Activated CD4-positive, alpha-beta T cell treated with anti-CD3 and anti-CD28 coated beads for 36 hours (primary cell): ENCODE measurements at regions of chr10 and their contacts with region 1.

Region 1: GRCh38 chr10:6050801-6051445 is 11.2 kb downstream of the IL2RA start:
- DNase-seq: peak; percentile 96
- ATAC-seq: peak; percentile 37
- H3K4me3 Mint-ChIP-seq: peak overlapping the region; percentile 81
- H3K27ac Mint-ChIP-seq: peak overlapping the region; percentile 96
- H3K4me1 Mint-ChIP-seq: peaks cover 85% of the 10 kb centered on the region
- H3K27me3 Mint-ChIP-seq: no peaks in the 10 kb centered on the region

Region 2: GRCh38 chr10:4825851-4826665 is 1224.9 kb before region 1 on chr10 and contains the start of gene AKR1E2:
- CTCF ChIA-PET with region 1: no interaction called
- POLR2A ChIA-PET with region 1: no interaction called
- intact Hi-C with region 1: no loop called
- DNase-seq: peak; percentile 93
- ATAC-seq: peak; percentile 94
- H3K4me3 Mint-ChIP-seq: peak within 1 kb of the TSS; percentile 77
- H3K27ac Mint-ChIP-seq: peak within 1 kb of the TSS; percentile 83
- H3K4me1 Mint-ChIP-seq: peaks cover 27% of the 10 kb centered on the region
- H3K27me3 Mint-ChIP-seq: peaks cover 9% of the 10 kb centered on the region
- total RNA-seq, gene AKR1E2: 9.8 to 13.4 TPM

Region 3: DNA sequence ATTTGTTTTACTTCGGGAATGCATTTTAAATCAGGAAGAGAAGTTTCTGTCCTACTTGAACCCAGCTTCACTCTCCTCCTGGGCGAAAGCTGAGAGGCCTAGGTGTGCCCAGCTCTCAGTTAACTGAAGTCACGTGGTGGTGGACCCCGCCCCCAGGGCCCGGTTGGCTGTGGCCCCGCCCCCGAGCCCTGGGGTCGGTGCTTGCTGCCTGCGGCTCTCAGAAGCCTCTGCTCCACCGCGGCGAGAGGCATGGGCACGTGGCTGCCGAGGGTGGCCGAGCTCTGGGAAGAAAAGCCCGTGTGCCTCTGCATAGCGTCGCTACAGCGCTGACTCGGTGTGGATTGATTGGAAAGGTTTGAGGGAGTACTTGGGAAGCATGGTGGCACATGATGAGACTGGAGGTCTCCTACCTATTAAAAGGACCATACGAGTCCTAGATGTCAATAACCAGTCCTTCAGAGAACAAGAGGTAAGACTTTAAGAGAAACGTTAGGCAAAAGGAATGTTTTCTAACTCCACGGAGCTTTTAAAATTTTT is 604.5 kb before region 1 on chr10:
- CTCF ChIA-PET with region 1: no interaction called
- POLR2A ChIA-PET with region 1: no interaction called
- intact Hi-C with region 1: loop called in 1 of 2 experiments (anchors 10 kb)
- DNase-seq: peak; percentile 86
- ATAC-seq: peak; percentile 71
- H3K4me3 Mint-ChIP-seq: peak overlapping the region; percentile 70
- H3K27ac Mint-ChIP-seq: peak overlapping the region; percentile 45
- H3K4me1 Mint-ChIP-seq: peaks cover 53% of the 10 kb centered on the region
- H3K27me3 Mint-ChIP-seq: no peaks in the 10 kb centered on the region

Region 4: GRCh38 chr10:5977471-5978229 is 73.3 kb before region 1 on chr10 and contains the start of gene IL15RA:
- CTCF ChIA-PET with region 1: interaction called, 6 read pairs
- POLR2A ChIA-PET with region 1: interaction called, 3 read pairs
- intact Hi-C with region 1: loop called (anchors 2 to 5 kb)
- DNase-seq: peak; percentile 95
- ATAC-seq: peak; percentile 72
- H3K4me3 Mint-ChIP-seq: peak within 1 kb of the TSS; percentile 94
- H3K27ac Mint-ChIP-seq: peak within 1 kb of the TSS; percentile 95
- H3K4me1 Mint-ChIP-seq: peaks cover 28% of the 10 kb centered on the region
- H3K27me3 Mint-ChIP-seq: no peaks in the 10 kb centered on the region
- total RNA-seq, gene IL15RA: 19.7 to 22.1 TPM

Region 5: DNA sequence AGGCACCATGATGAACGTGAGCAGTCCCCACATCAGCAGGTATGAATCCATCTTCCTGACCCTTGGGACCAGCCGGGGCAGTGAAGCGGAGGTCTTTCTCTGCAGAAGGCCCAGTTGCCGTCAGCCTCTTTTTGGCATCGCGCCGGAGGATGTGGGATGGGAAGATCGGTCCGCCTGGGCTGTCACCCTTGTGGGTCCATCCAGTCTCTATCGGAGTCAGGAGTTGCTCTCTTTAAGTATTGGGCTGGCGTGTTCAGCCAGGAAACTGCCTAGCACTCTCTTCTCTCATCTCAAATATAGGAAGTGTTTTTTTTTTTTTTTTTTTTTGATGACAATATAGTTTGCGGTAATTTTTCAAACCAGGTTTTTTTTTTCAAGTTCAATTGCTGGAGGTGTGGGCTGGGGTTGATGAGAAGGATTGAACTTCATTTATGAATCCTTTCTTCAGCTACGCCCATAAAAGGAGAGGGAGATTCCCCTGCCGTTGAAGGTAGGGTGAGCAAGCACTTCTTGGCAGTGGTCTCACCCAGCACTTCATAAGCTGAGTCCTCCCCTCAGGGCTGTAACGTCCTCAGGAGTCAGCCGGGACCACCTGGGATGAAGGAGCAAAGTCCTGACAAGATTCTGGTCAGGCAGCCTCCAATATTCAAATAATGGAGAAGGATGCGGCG is 11.3 kb after region 1 on chr10 and contains the start of gene IL2RA:
- CTCF ChIA-PET with region 1: interaction called, 20 read pairs
- POLR2A ChIA-PET with region 1: interaction called, 29 read pairs
- intact Hi-C with region 1: loop called (anchors 1 kb)
- DNase-seq: peak; percentile 87
- ATAC-seq: peak; percentile 79
- H3K4me3 Mint-ChIP-seq: peak within 1 kb of the TSS; percentile 91
- H3K27ac Mint-ChIP-seq: peak within 1 kb of the TSS; percentile 93
- H3K4me1 Mint-ChIP-seq: peaks cover 53% of the 10 kb centered on the region
- H3K27me3 Mint-ChIP-seq: peaks cover 3% of the 10 kb centered on the region
- total RNA-seq, gene IL2RA: 659 to 980 TPM

Region 6: DNA sequence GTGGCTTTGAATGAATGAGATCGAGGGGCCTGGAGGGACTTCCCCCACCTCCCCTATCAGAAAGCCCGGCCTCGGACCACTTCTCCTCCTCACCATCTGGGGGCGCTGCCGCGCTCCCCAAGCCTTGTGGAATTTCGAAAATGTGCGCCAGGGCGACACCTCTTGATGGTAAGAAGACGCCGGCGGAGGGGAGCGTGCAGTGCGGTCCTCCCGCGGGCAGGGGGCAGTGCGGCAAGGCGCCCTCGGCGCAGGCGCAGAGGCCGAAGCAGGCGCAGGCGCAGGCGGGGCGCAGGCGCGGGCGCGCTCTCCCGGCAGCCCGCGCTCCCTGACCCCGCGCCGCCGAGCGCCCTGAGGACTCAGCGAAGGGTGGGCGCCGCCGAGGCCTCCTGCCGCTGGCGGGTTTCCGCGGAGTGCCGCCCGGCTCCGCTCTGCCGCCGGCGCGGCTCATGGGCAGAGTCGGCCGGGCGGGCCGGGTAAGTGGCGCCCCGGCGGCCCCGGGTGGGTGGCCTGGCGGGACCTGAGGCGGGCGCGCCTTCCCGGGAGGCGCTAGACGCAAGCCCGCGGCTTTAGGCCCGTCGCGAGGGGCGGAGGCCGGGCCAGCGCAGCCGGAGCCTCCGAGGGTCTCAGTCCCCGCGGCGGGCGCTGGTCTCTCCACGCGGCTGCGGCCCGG is 37.9 kb after region 1 on chr10 and contains the start of gene RBM17:
- CTCF ChIA-PET with region 1: interaction called, 113 read pairs
- POLR2A ChIA-PET with region 1: interaction called, 70 read pairs
- intact Hi-C with region 1: no loop called
- DNase-seq: peak; percentile 98
- ATAC-seq: peak; percentile 70
- H3K4me3 Mint-ChIP-seq: peak within 1 kb of the TSS; percentile 90
- H3K27ac Mint-ChIP-seq: peak within 1 kb of the TSS; percentile 78
- H3K4me1 Mint-ChIP-seq: peaks cover 73% of the 10 kb centered on the region
- H3K27me3 Mint-ChIP-seq: no peaks in the 10 kb centered on the region
- total RNA-seq, gene RBM17: 206 to 246 TPM

Region 7: DNA sequence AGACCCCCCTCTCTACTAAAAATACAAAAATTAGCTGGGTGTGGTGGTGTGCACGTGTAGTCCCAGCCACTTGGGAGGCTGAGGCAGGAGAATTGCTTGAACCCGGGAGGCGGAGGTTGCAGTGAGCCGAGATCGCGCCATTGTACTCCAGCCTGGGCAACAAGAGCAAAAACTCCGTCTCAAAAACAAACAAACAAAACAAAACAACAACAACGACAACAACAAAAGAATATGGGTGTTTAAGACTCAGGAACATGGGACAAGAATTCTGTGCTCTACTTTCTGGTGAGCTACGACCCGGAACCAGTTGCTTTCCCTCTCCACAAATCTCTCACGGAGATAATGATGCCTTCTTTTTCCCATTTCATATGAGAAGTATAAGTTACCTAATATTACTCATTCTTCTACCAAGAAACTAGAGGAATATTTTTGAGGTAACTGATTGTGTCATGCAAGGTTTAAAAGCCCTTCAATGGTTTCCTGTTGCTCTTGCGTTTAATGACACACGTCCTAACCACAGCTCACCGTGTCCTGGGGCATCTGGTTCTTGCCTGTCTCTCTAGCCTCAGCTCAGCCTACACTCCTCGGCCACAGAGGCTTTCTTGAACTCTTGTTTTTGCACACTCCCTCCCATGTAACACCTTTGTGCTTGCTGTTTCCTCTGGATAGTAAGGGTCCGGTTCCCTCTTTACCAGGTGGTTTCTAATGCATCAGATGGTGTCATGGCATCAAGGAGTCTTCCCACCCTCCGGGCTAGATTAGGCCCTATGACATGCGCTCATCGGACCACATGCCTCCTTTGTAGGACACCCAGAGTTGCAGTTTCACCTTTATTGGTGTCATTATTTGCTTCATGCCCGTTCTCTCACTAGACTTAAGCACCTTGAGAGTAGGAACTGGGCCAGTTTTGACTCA is 219.3 kb after region 1 on chr10:
- CTCF ChIA-PET with region 1: no interaction called
- POLR2A ChIA-PET with region 1: interaction called, 3 read pairs
- intact Hi-C with region 1: loop called (anchors 1 to 5 kb)
- DNase-seq: peak; percentile 90
- ATAC-seq: peak; percentile 72
- H3K4me3 Mint-ChIP-seq: peak overlapping the region; percentile 25
- H3K27ac Mint-ChIP-seq: peak overlapping the region; percentile 92
- H3K4me1 Mint-ChIP-seq: peaks cover 73% of the 10 kb centered on the region
- H3K27me3 Mint-ChIP-seq: no peaks in the 10 kb centered on the region